GM18951 (cell line): ENCODE measurements at regions of chr17 and their contacts with region 1.

Region 1: DNA sequence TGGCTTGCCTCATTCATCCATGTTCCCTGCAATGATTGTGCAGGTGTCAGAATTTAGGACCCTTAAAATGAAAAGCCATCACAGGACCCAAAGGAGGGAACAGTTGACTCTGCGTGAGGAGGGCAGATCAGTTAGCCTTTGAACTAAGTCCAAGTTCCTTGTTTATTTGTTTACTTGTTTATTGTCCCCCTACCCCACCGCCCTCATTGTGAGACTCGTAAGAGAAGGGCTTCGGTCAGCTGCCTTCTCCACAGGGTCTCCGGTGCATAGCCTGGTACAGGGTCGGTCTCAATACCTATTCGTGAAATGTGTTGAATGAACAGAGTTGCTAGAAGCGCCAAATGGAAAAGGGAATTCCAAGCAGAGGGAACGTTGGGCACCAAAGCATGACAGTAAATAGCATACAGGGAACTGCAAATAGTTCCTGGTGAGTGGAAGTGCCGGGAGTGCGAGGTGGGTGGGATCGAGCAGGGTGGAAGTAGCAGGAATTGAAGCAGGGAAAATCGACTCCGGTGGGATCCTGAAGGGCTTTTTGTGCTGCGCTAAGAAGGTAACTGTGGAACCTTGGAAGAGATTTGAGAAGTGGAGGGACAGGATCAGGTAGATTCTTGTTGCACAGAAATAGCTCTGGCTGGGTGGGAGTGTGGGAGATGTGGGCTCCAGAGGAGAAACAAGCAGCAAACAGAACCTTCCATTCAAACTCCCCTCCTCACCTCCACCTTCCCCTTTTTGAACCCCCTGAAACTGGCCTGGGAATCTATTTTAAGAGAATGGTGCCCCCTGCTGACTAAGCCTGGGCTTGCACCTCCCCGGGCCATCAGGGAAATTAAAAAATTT is 12.7 kb downstream of the SLC35B1 start:
- POLR2A ChIP-seq: no peak

Region 2: DNA sequence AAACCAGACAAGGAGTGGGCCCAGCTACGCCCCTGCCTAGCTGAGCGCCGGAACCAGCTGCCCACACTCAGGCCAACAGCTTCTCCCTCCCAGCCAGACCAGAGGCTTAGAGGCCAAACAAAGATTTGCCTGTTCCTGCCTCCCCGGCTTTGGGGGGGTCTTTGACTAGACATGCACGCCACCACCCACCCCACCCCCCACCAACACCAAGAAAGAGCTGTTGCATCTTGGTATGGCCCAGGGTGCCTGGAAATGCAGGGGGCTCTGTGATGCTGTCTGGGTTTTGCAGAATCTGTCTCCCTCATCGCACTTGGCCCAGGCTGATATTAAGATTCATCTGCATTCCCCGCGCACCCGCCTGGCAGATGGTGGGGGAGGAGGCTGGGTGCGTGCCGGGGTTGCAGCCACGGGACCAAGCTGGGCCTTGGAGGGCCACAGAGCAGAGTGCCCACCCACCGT is 120.7 kb before region 1 on chr17:
- in situ Hi-C with region 1: loop called (anchors 5 kb)
- POLR2A ChIP-seq: no peak

Region 3: GRCh38 chr17:49843774-49844350 is 148.8 kb after region 1 on chr17:
- in situ Hi-C with region 1: loop called (anchors 10 kb)
- POLR2A ChIP-seq: no peak